ENCODE measurements at regions of chr13 and their contacts with region 1.

Region 1: DNA sequence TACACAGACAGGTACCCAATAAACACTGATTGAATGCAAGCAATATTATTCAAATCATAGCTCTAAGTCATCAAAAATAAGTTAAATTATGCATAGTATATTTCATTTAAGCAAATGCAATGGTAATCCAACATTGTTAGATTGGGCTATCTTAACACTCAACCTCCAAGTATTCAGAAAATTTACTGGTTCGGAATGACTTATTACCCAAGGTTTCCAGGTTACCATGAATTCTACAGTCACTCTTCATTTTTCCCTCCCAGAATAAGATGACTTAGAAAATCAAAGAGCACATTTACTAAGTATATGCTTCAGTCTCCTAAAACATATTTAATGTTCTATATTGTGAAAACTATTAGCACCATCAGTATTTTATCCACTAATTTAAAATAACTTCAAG is 6.0 kb downstream of the UBL3 start:
- DNase-seq: no peak
- H3K4me3 ChIP-seq: no peak overlapping the region
- H3K4me3 Mint-ChIP-seq: no peak overlapping the region
- H3K27ac Mint-ChIP-seq: peak overlapping the region; percentile 32
- H3K4me1 ChIP-seq: peaks cover 58% of the 10 kb centered on the region
- H3K4me1 Mint-ChIP-seq: peaks cover 41% of the 10 kb centered on the region
- H3K27me3 ChIP-seq: no peaks in the 10 kb centered on the region
- H3K27me3 Mint-ChIP-seq: no peaks in the 10 kb centered on the region
- CTCF ChIP-seq: no peak

Region 2: GRCh38 chr13:29786698-29787097 is 57.7 kb before region 1 on chr13:
- CTCF ChIA-PET with region 1: no interaction called
- POLR2A ChIA-PET with region 1: interaction called, 4 read pairs
- intact Hi-C with region 1: loop called (anchors 5 kb)
- DNase-seq: no peak
- H3K4me3 ChIP-seq: no peak overlapping the region
- H3K4me3 Mint-ChIP-seq: no peak overlapping the region
- H3K27ac Mint-ChIP-seq: peak overlapping the region; percentile 57
- H3K4me1 ChIP-seq: peaks cover 53% of the 10 kb centered on the region
- H3K4me1 Mint-ChIP-seq: peaks cover 42% of the 10 kb centered on the region
- H3K27me3 ChIP-seq: no peaks in the 10 kb centered on the region
- H3K27me3 Mint-ChIP-seq: no peaks in the 10 kb centered on the region
- CTCF ChIP-seq: no peak

Measured in Caco-2 (cell line).